Endothelial cell of umbilical vein (primary cell): ENCODE measurements at regions of chr3 and their contacts with region 1.

Region 1: GRCh38 chr3:8987645-8988383 is 24.5 kb upstream of the RAD18 start:
- DNase-seq: peak; percentile 67
- H3K4me3 ChIP-seq: no peak overlapping the region
- H3K27ac ChIP-seq: no peak overlapping the region
- H3K4me1 ChIP-seq: no peaks in the 10 kb centered on the region
- H3K27me3 ChIP-seq: no peaks in the 10 kb centered on the region
- CTCF ChIP-seq: peak; percentile 70 to 88
- POLR2A ChIP-seq: no peak

Region 2: DNA sequence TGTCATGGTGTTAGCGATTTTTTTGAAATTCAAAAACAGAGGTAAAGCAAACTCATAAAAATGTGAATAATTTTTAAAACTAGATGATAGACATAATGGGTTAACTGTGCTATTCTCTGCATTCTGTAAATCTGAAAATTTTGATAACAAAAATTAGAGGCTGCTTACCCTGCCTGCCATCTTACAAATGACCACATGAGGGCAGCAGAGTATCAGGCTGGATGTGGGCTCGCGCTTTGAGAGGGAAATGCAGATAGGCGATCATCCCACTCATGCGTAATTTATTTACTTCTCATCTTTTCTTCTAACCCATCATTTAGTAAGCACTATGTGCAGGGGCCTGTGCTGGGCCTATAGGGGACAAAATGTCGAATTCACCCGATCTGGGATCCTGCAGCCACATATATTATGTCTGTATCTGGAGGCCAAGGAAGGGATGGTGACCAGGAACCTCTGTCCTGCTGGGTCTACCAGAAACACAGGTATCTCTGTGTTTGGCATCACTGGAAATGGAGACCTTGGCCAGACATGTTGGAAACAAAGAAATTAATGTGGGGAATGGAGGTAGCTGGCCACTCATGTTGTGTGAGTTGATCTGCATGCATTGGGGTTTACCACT is 16.7 kb before region 1 on chr3:
- CTCF ChIA-PET with region 1: interaction called, 73 read pairs
- POLR2A ChIA-PET with region 1: no interaction called
- dilution Hi-C with region 1: no loop called
- intact Hi-C with region 1: loop called (anchors 1 kb)
- DNase-seq: peak; percentile 60
- H3K4me3 ChIP-seq: no peak overlapping the region
- H3K27ac ChIP-seq: no peak overlapping the region
- H3K4me1 ChIP-seq: no peaks in the 10 kb centered on the region
- H3K27me3 ChIP-seq: peaks cover 2 to 8% of the 10 kb centered on the region in 2 experiments
- CTCF ChIP-seq: peak; percentile 82 to 89
- POLR2A ChIP-seq: no peak

Region 3: GRCh38 chr3:9013782-9014563 is 26.2 kb after region 1 on chr3:
- CTCF ChIA-PET with region 1: interaction called, 11 read pairs
- POLR2A ChIA-PET with region 1: no interaction called
- dilution Hi-C with region 1: no loop called
- intact Hi-C with region 1: no loop called
- DNase-seq: no peak
- H3K4me3 ChIP-seq: no peak overlapping the region
- H3K27ac ChIP-seq: no peak overlapping the region
- H3K4me1 ChIP-seq: no peaks in the 10 kb centered on the region
- H3K27me3 ChIP-seq: no peaks in the 10 kb centered on the region
- CTCF ChIP-seq: no peak
- POLR2A ChIP-seq: no peak

Region 4: GRCh38 chr3:9067352-9067975 is 79.7 kb after region 1 on chr3:
- CTCF ChIA-PET with region 1: interaction called, 24 read pairs
- POLR2A ChIA-PET with region 1: no interaction called
- dilution Hi-C with region 1: no loop called
- intact Hi-C with region 1: loop called (anchors 1 kb)
- DNase-seq: peak; percentile 61
- H3K4me3 ChIP-seq: no peak overlapping the region
- H3K27ac ChIP-seq: no peak overlapping the region
- H3K4me1 ChIP-seq: no peaks in the 10 kb centered on the region
- H3K27me3 ChIP-seq: no peaks in the 10 kb centered on the region
- CTCF ChIP-seq: peak; percentile 78
- POLR2A ChIP-seq: no peak

Region 5: GRCh38 chr3:9986237-9986725 is 998.5 kb after region 1 on chr3:
- CTCF ChIA-PET with region 1: no interaction called
- POLR2A ChIA-PET with region 1: no interaction called
- dilution Hi-C with region 1: no loop called
- intact Hi-C with region 1: no loop called
- DNase-seq: no peak
- H3K4me3 ChIP-seq: peak overlapping the region; percentile 45 to 71 (median 65)
- H3K27ac ChIP-seq: peak overlapping the region; percentile 54
- H3K4me1 ChIP-seq: peaks cover 17% of the 10 kb centered on the region
- H3K27me3 ChIP-seq: no peaks in the 10 kb centered on the region
- CTCF ChIP-seq: no peak
- POLR2A ChIP-seq: no peak